ENCODE measurements at regions of chr19 and their contacts with region 1.

Region 1: DNA sequence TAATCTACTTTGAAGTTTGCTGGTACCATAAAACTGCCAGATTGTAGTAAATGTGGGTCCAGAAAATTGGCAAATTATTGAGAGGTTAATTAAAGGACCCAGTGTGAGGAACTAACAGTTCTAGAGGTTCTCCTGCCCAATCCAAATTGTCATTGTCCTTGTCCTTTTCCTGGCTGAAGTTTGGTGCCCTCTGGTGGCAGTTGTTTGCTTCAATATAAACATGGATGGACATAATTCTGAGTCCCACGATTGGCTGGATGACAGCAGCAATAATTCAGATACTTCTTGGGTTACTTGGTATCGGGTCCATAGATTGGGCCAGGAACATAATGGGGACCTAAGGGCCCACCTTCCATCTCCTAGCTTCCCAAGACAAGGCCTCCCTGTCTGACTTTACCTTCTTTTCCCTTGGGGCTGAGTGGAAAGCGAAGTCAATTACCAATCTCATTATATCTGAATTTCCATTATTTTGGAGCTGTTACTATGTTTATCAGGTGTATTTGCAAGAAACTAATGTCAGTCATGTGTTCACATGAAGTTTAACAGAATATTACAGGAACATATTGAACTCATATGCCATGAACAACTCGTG is 33.8 kb upstream of the GARRE1 start:
- DNase-seq: peak; percentile 75
- ATAC-seq: peak; percentile 42
- H3K4me3 ChIP-seq: no peak overlapping the region
- H3K4me3 Mint-ChIP-seq: no peak overlapping the region
- H3K27ac ChIP-seq: no peak overlapping the region
- H3K27ac Mint-ChIP-seq: peak overlapping the region; percentile 72
- H3K4me1 ChIP-seq: peaks cover 22 to 24% of the 10 kb centered on the region in 2 donors
- H3K4me1 Mint-ChIP-seq: peaks cover 32% of the 10 kb centered on the region
- H3K27me3 ChIP-seq: no peaks in the 10 kb centered on the region
- H3K27me3 Mint-ChIP-seq: no peaks in the 10 kb centered on the region
- CTCF ChIP-seq: peak; percentile 86

Region 2: DNA sequence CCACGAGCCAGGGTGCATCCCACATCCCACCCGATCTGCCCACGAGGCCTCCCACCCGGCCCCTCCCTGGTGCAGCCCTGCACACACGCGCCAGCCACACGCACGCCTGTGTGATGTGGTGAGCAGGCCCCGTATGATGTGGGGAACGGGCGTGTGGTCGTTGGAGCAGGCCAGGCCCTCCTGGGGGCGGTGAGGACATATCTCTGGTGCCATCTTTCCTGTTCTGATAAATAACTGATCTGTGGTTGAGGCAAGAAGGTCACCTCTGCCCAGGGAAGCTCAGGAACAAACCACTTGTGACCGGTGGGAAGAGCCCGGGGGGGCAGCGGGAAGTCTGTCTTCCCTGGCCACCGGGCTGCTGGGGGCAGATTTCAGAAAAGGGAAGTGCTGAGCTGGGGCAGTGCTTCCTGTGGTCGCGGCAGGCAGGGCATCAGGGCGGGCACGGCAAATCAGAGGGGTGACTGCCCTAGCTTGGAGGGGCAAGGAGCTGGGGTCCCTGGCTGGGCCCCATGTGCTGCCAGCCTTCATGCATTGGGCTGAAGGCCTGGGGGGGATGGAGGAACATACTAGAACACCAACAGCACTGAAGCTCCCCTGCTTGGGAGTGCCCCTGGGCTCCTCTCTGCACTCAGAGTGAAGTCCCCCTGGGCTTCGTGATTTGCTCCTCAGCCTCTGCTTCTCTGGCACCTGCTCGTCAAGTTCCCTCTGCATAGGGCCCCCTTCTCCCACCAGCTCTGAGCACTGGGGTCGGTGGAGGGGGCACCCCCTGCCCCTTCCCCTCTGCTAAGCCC is 959.7 kb before region 1 on chr19:
- CTCF ChIA-PET with region 1: no interaction called
- POLR2A ChIA-PET with region 1: no interaction called
- intact Hi-C with region 1: no loop called
- DNase-seq: peak; percentile 32
- ATAC-seq: peak; percentile 14
- H3K4me3 ChIP-seq: no peak overlapping the region
- H3K4me3 Mint-ChIP-seq: peak overlapping the region; percentile 63
- H3K27ac ChIP-seq: no peak overlapping the region
- H3K27ac Mint-ChIP-seq: no peak overlapping the region
- H3K4me1 ChIP-seq: peaks cover 13 to 14% of the 10 kb centered on the region in 2 donors
- H3K4me1 Mint-ChIP-seq: peaks cover 14% of the 10 kb centered on the region
- H3K27me3 ChIP-seq: peaks cover 0 to 10% (median 4%) of the 10 kb centered on the region in 4 experiments
- H3K27me3 Mint-ChIP-seq: peaks cover 23% of the 10 kb centered on the region
- CTCF ChIP-seq: no peak

Region 3: GRCh38 chr19:34120846-34121639 is 99.5 kb before region 1 on chr19:
- CTCF ChIA-PET with region 1: no interaction called
- POLR2A ChIA-PET with region 1: no interaction called
- intact Hi-C with region 1: loop called (anchors 2 kb)
- DNase-seq: peak; percentile 55
- ATAC-seq: peak; percentile 24
- H3K4me3 ChIP-seq: no peak overlapping the region
- H3K4me3 Mint-ChIP-seq: no peak overlapping the region
- H3K27ac ChIP-seq: no peak overlapping the region
- H3K27ac Mint-ChIP-seq: no peak overlapping the region
- H3K4me1 ChIP-seq: no peaks in the 10 kb centered on the region
- H3K4me1 Mint-ChIP-seq: no peaks in the 10 kb centered on the region
- H3K27me3 ChIP-seq: peaks cover 0 to 4% (median 0%) of the 10 kb centered on the region in 4 experiments
- H3K27me3 Mint-ChIP-seq: peaks cover 15% of the 10 kb centered on the region
- CTCF ChIP-seq: peak; percentile 74

Region 4: GRCh38 chr19:34232566-34233481 is 12.3 kb after region 1 on chr19:
- CTCF ChIA-PET with region 1: interaction called, 10 read pairs
- POLR2A ChIA-PET with region 1: interaction called, 8 read pairs
- intact Hi-C with region 1: no loop called
- DNase-seq: no peak
- ATAC-seq: no peak
- H3K4me3 ChIP-seq: no peak overlapping the region
- H3K4me3 Mint-ChIP-seq: no peak overlapping the region
- H3K27ac ChIP-seq: no peak overlapping the region
- H3K27ac Mint-ChIP-seq: peak overlapping the region; percentile 68
- H3K4me1 ChIP-seq: peaks cover 0 to 8% of the 10 kb centered on the region in 2 donors
- H3K4me1 Mint-ChIP-seq: peaks cover 10% of the 10 kb centered on the region
- H3K27me3 ChIP-seq: no peaks in the 10 kb centered on the region
- H3K27me3 Mint-ChIP-seq: no peaks in the 10 kb centered on the region
- CTCF ChIP-seq: no peak